Dorsolateral prefrontal cortex (tissue), 120 donors: ENCODE measurements at regions of chr17 and their contacts with region 1.

Region 1: GRCh38 chr17:35242805-35243560 is at the start of gene SLFN5:
- DNase-seq: peak; percentile 81 to 96 (median 88)
- H3K4me3 ChIP-seq: peak within 1 kb of the TSS; percentile 53 to 94 (median 77)
- H3K27ac ChIP-seq: peak within 1 kb of the TSS in 58 of 59 donors; percentile 1 to 93 (median 83)
- H3K27me3 ChIP-seq: peaks cover 0 to 4% (median 0%) of the 10 kb centered on the region in 45 donors
- CTCF ChIP-seq: peak in 2 of 56 donors; percentile 2 to 6
- total RNA-seq, gene SLFN5: 3.2 to 21.5 (median 10.2) TPM

Region 2: GRCh38 chr17:35286120-35286781 is 43.3 kb after region 1 on chr17:
- intact Hi-C with region 1: no loop called
- DNase-seq: no peak
- H3K4me3 ChIP-seq: no peak overlapping the region
- H3K27ac ChIP-seq: no peak overlapping the region
- H3K27me3 ChIP-seq: peaks cover 0 to 9% (median 0%) of the 10 kb centered on the region in 45 donors
- CTCF ChIP-seq: no peak

Region 3: GRCh38 chr17:35299129-35299528 is 56.1 kb after region 1 on chr17:
- intact Hi-C with region 1: loop called in 1 of 2 experiments (anchors 5 kb)
- DNase-seq: no peak
- H3K4me3 ChIP-seq: no peak overlapping the region
- H3K27ac ChIP-seq: no peak overlapping the region
- H3K27me3 ChIP-seq: peaks cover 0 to 12% (median 0%) of the 10 kb centered on the region in 45 donors
- CTCF ChIP-seq: no peak